ENCODE measurements at regions of chr14 and their contacts with region 1.

Region 1: DNA sequence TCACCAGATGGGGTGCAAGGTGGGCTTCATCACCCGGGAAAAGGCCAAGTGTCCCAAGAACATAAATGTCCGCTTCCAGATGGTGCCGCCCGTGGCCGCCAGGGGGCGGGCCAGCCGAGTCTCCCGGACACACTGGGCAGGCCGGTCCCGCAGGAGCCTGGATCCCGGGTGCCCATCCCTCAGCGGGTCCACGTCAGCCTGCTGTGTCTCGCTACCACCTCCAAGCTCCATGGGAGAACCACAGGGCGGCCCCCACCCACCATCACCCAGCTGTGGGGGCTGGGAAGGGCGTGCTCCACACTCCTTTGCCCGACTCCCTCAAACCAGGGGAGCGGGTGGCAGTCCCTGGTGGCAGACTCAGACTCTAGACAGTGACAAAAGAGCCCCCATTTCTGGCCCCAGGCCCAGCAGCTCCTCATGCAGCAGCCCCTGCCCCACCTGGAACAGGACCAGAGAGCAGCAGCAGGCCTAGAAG is 22.0 kb upstream of the NUDT14 start:
- DNase-seq: peak in 2 of 3 donors; percentile 53 to 55
- H3K4me3 ChIP-seq: no peak overlapping the region
- H3K27ac ChIP-seq: no peak overlapping the region
- H3K4me1 ChIP-seq: peaks cover 0 to 54% (median 40%) of the 10 kb centered on the region in 4 experiments
- H3K27me3 ChIP-seq: peaks cover 0 to 28% (median 11%) of the 10 kb centered on the region in 5 experiments

Region 2: DNA sequence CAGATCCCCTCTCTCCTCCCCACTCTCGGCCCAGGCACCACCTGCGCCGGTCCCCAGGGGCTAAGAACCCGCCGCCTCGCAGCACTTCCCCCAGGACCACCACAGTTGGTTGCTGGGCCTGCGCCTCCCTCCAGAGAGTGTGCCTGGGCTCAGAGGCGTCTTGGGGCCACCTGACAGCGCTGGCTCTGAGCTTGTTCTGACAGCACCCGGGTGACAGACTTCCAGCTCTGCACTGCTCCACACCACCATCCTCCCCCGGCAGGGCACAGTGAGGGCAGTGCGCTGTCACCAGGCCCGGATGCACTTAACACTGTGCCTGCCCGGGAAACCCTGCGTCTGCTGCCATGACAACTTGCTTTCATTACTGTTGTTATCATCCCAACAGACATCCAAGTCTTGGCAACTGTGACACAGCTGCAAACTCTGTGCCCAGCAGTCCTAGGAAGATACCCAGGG is 91.1 kb after region 1 on chr14:
- CTCF ChIA-PET with region 1: interaction called, 16 read pairs
- POLR2A ChIA-PET with region 1: interaction called, 3 read pairs
- DNase-seq: peak; percentile 81 to 96 (median 95)
- H3K4me3 ChIP-seq: peak overlapping the region in 4 of 7 experiments; percentile 1 to 66 (median 52)
- H3K27ac ChIP-seq: peak overlapping the region; percentile 95 to 96
- H3K4me1 ChIP-seq: peaks cover 8 to 71% (median 60%) of the 10 kb centered on the region in 4 experiments
- H3K27me3 ChIP-seq: no peaks in the 10 kb centered on the region